IMR-90 (cell line): ENCODE measurements at regions of chr1 and their contacts with region 1.

Region 1: DNA sequence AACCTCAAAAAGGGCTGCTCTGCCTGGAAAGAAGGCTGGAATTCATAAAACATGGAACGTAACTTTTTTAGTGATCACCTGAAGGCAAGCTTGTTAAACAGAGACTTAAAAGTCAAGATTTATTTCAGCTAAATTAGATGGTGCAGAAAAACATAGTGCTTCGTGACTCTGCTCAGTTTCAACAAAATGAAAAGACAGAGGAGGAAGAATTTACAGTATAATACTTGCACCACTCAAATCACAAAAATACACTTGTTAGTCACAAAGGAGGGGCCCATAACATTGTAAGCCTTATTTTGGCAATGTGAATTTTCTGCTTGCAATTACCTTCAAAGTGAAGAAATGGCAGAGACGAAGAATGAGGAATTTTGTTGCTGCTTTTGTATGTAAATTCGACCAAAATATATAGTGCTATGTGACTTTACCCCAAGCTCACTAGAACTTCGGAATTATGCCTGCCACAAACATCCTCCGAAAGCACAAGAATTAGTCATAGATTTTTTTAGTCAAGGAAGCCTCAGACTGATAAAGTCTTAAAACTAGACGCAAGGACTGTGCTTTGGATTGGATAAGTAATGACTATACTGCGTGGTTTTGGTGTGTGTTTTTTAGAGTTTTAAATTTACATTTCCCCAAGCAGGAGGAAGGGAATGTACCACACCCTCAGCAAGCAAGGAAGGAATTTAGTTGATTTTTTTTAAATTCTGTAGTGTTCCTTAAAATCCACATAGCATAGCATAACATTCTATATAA is 10.5 kb downstream of the WLS start:
- DNase-seq: peak; percentile 70
- ATAC-seq: peak; percentile 80
- H3K4me3 ChIP-seq: no peak overlapping the region
- H3K27ac ChIP-seq: no peak overlapping the region
- H3K4me1 ChIP-seq: peaks cover 21% of the 10 kb centered on the region
- H3K27me3 ChIP-seq: no peaks in the 10 kb centered on the region
- CTCF ChIP-seq: no peak
- POLR2A ChIP-seq: no peak
- RAD21 ChIP-seq: no peak

Region 2: DNA sequence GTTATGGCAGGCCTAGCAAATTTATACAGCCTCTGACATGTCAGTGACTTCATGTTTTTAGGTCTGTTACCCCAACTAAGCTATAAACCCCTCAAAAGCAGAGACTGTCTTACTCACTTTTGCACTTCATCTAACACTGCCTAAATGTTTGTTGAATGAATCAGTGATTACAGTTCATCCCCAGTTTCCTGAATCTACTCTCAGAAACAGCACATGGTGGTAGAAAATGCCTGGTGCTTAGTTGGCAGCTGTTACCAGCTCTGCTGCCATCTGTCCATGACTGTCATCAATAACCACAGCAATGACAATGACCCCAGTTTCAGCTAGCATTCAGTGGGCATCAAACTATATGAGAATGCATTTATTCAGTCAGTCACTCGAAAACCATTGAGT is 681.1 kb before region 1 on chr1:
- CTCF ChIA-PET with region 1: no interaction called
- POLR2A ChIA-PET with region 1: no interaction called
- dilution Hi-C with region 1: no loop called
- in situ Hi-C with region 1: no loop called
- intact Hi-C with region 1: loop called (anchors 5 kb)
- DNase-seq: peak; percentile 31
- ATAC-seq: no peak
- H3K4me3 ChIP-seq: no peak overlapping the region
- H3K27ac ChIP-seq: no peak overlapping the region
- H3K4me1 ChIP-seq: no peaks in the 10 kb centered on the region
- H3K27me3 ChIP-seq: no peaks in the 10 kb centered on the region
- CTCF ChIP-seq: no peak
- POLR2A ChIP-seq: no peak
- RAD21 ChIP-seq: no peak

Region 3: DNA sequence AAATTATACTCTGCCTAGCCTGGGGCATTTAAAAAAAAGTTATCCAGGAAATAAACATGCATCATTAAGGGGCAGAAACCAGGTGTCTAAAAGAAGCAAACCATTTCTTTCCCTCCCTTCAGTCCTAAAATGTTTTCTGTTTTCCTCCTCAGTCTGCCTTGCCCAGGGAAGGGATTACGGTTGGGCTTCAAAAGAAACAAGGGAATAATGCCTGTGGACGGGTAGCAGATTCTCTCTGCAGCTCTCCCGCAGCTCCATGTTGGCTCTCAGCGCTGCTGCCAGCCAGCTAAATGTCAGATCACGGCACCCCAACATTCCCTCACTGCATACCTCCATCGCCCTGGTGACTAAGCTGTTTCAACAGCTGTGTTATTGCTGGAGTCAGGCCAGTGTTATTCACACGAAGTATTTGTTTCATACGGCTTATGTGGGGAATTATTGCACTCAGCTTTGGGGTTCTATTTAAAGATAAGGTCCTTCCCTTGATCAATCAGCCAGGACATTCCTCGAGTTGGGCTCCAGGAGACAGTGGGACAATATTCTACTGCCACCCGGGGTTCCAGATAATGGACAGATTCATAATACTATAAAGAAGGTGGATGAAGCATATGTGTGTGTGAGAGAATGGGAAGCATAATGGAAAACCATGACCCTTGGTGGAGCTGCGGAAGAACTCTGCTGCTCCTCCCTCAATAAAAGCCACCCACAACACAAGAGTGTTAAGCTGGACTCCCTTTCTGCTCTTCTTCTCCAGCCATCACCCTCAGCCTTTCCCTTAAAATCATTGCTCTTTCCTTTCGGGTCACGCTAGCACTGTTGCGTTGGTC is 47.7 kb before region 1 on chr1:
- CTCF ChIA-PET with region 1: no interaction called
- POLR2A ChIA-PET with region 1: no interaction called
- dilution Hi-C with region 1: no loop called
- in situ Hi-C with region 1: no loop called
- intact Hi-C with region 1: loop called (anchors 2 kb)
- DNase-seq: peak; percentile 98
- ATAC-seq: peak; percentile 77
- H3K4me3 ChIP-seq: no peak overlapping the region
- H3K27ac ChIP-seq: peak overlapping the region; percentile 82
- H3K4me1 ChIP-seq: peaks cover 25% of the 10 kb centered on the region
- H3K27me3 ChIP-seq: no peaks in the 10 kb centered on the region
- CTCF ChIP-seq: no peak
- POLR2A ChIP-seq: no peak
- RAD21 ChIP-seq: no peak